IMR-90 (cell line): ENCODE measurements at regions of chr3 and their contacts with region 1.

Region 1: GRCh38 chr3:133573054-133573628 is 345 bp upstream of the CDV3 start:
- DNase-seq: peak; percentile 100
- ATAC-seq: peak; percentile 85
- H3K4me3 ChIP-seq: peak overlapping the region; percentile 75
- H3K27ac ChIP-seq: peak overlapping the region; percentile 76
- H3K4me1 ChIP-seq: peaks cover 15% of the 10 kb centered on the region
- H3K27me3 ChIP-seq: no peaks in the 10 kb centered on the region
- CTCF ChIP-seq: peak; percentile 22
- POLR2A ChIP-seq: no peak
- RAD21 ChIP-seq: no peak

Region 2: DNA sequence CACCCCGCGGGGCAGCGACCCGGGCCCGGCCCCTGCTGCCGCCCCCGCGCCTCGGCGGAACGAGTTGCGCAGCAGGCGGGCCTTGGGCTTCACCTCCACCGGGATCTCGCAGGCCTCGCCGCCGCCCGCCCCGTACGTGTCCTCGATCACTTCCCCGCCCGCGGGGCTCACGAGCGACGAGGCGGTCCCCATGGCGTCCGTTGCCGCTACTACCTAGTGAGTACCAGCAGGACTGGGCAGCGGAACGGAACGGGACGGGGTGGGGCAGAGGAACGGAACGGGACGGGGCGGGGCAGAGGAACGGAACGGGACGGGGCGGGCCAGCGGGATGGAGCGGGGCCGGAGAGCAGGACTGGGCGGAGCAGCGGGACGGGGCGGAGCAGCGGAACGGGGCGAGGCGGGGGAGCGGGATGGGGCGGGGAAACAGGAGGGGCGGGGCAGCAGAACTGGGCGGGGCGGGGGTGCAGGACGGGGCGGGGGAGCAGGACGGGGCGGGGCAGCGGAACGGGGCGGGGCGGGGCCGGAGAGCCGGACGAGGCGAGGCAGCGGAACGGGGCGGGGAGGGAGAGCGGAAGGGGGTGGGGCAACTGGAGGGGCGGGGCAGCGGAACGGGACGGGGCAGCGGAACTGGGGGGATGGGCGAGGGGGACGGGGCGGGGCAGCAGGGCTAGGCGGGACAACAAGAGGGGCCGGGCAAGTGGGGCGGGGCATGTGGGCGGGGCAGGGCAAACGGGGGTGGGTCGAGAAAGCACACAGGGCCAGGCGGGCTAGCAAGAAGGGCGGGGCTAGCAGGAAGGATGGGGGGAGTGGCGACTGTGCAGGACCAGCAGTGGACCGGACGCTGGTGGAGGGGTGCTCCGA is 850.7 kb before region 1 on chr3 and contains the start of gene NPHP3:
- CTCF ChIA-PET with region 1: no interaction called
- POLR2A ChIA-PET with region 1: no interaction called
- dilution Hi-C with region 1: no loop called
- in situ Hi-C with region 1: no loop called
- intact Hi-C with region 1: loop called (anchors 2 kb)
- DNase-seq: peak; percentile 96
- ATAC-seq: peak; percentile 87
- H3K4me3 ChIP-seq: peak within 1 kb of the TSS; percentile 96
- H3K27ac ChIP-seq: peak within 1 kb of the TSS; percentile 88
- H3K4me1 ChIP-seq: peaks cover 7% of the 10 kb centered on the region
- H3K27me3 ChIP-seq: no peaks in the 10 kb centered on the region
- CTCF ChIP-seq: no peak
- POLR2A ChIP-seq: peak; percentile 89
- RAD21 ChIP-seq: no peak
- total RNA-seq, gene NPHP3: 21.3 and 26.9 TPM in 2 replicates

Region 3: DNA sequence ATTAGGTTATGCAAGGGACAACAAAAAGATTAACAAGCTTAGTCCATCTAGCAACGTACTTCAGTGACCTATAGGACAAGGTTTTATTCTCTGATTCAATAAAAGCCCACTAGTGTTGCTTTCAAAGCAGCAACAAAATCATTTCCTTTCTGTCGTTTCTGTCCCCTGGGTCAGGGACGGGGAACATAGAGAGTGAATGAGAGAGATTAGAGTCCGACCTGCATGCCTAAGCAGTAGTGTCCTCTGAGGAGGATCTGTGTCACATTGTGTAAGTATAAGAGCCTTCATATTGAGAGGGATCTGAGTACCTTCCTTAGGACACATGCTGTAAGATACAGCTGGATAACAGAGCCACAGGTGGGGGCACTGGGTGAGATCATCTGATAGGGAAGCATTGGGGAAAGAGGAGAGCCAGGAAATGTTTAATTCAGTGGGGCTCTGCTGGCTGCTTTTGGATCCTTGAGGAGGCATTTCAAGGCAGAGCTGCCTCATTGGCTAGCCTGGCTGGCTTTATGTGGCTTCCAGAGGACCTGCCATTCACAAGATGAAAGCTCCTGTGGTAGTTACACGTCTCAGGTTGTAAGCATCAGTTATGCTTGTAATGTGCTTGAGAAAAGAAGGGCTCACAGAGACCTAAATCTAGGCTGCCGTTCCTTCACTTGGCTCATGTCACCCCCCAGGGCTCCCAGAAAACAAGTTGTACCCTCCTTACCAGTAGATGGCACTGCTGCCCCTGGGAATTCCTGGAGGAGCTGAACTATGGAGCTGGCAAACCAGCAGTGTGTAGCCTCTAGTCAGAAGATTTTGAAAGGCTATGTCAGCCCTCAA is 532.2 kb before region 1 on chr3:
- CTCF ChIA-PET with region 1: no interaction called
- POLR2A ChIA-PET with region 1: no interaction called
- dilution Hi-C with region 1: no loop called
- in situ Hi-C with region 1: no loop called
- intact Hi-C with region 1: loop called (anchors 5 kb)
- DNase-seq: peak; percentile 71
- ATAC-seq: peak; percentile 92
- H3K4me3 ChIP-seq: no peak overlapping the region
- H3K27ac ChIP-seq: no peak overlapping the region
- H3K4me1 ChIP-seq: no peaks in the 10 kb centered on the region
- H3K27me3 ChIP-seq: peaks cover 21% of the 10 kb centered on the region
- CTCF ChIP-seq: peak; percentile 91
- POLR2A ChIP-seq: no peak
- RAD21 ChIP-seq: peak; percentile 94

Region 4: DNA sequence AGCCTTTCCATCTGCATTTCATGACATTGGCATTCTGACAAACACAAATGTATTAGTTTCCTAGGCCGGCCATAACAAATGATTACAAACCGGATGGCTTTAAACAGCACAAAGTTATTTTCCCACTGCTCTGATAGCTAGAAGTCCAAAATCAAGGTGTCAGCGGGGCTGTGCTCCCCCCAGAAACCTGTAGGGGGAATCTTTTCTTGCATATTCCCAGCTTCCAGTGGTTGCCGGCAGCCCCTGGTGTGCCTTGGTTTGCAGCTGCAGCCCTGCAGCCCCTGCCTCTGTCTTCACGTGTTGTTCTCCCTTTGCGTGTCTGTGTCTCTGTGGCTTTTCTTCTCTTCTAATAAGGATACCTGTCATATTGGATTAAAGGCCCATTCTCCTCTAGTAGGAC is 78.7 kb before region 1 on chr3:
- CTCF ChIA-PET with region 1: interaction called, 4 read pairs
- POLR2A ChIA-PET with region 1: no interaction called
- dilution Hi-C with region 1: no loop called
- in situ Hi-C with region 1: no loop called
- intact Hi-C with region 1: loop called (anchors 1 kb)
- DNase-seq: peak; percentile 20
- ATAC-seq: no peak
- H3K4me3 ChIP-seq: no peak overlapping the region
- H3K27ac ChIP-seq: no peak overlapping the region
- H3K4me1 ChIP-seq: no peaks in the 10 kb centered on the region; the same call in 1 of the 2 replicates
- H3K27me3 ChIP-seq: no peaks in the 10 kb centered on the region
- CTCF ChIP-seq: peak; percentile 47
- POLR2A ChIP-seq: no peak
- RAD21 ChIP-seq: peak; percentile 46

Region 5: DNA sequence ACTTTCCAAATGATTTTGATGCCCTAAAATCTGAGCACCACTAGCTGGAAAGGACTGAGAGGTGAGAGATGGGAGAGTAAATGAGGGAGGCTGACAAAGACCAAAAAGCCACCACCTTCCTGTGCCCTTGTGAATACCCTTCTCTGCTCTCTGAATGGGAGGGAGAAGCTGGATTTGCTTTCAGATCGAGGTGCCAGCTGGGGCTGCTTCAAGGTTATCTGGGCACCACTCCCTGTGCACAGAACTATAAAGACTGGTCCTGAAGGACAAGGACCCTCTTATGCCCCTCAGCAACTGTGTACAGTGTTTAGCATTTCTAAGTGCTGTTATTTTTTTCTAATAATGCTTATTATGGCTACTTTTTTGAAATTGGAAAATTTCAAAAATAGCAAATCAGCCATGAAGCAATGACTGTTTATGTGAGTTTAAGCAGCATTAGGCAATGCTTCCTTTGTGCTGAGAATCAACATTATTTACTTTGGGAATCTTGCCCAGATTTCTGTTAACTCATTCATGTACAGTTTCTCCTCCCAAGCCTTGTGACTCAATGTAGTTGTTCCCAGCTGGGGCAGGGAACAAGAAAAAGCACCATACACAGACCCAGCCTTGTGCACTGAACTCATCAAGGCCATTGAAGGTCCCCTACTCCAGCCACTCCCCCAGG is 37.0 kb before region 1 on chr3:
- CTCF ChIA-PET with region 1: interaction called, 4 read pairs
- POLR2A ChIA-PET with region 1: interaction called, 4 read pairs
- dilution Hi-C with region 1: no loop called
- in situ Hi-C with region 1: no loop called
- intact Hi-C with region 1: loop called (anchors 1 kb)
- DNase-seq: peak; percentile 98
- ATAC-seq: peak; percentile 82
- H3K4me3 ChIP-seq: no peak overlapping the region
- H3K27ac ChIP-seq: peak overlapping the region; percentile 91
- H3K4me1 ChIP-seq: peaks cover 29% of the 10 kb centered on the region
- H3K27me3 ChIP-seq: no peaks in the 10 kb centered on the region
- CTCF ChIP-seq: no peak
- POLR2A ChIP-seq: no peak
- RAD21 ChIP-seq: no peak; the same call in 1 of the 2 replicates